ENCODE measurements at regions of chr20 and their contacts with region 1.

Region 1: GRCh38 chr20:17995967-17996819 is 27.4 kb downstream of the MGME1 start:
- DNase-seq: peak; percentile 52 to 55 (median 52)
- ATAC-seq: peak; percentile 83
- H3K4me3 ChIP-seq: no peak overlapping the region
- H3K27ac ChIP-seq: no peak overlapping the region
- H3K4me1 ChIP-seq: no peaks in the 10 kb centered on the region; a peak in 1 of 5 replicates
- H3K27me3 ChIP-seq: peaks cover 6 to 7% of the 10 kb centered on the region in 2 experiments; a peak in 3 of 5 replicates
- CTCF ChIP-seq: peak; percentile 69 to 89 (median 81)
- EP300 ChIP-seq: no peak
- POLR2A ChIP-seq: no peak
- RAD21 ChIP-seq: peak; percentile 72 to 82

Region 2: DNA sequence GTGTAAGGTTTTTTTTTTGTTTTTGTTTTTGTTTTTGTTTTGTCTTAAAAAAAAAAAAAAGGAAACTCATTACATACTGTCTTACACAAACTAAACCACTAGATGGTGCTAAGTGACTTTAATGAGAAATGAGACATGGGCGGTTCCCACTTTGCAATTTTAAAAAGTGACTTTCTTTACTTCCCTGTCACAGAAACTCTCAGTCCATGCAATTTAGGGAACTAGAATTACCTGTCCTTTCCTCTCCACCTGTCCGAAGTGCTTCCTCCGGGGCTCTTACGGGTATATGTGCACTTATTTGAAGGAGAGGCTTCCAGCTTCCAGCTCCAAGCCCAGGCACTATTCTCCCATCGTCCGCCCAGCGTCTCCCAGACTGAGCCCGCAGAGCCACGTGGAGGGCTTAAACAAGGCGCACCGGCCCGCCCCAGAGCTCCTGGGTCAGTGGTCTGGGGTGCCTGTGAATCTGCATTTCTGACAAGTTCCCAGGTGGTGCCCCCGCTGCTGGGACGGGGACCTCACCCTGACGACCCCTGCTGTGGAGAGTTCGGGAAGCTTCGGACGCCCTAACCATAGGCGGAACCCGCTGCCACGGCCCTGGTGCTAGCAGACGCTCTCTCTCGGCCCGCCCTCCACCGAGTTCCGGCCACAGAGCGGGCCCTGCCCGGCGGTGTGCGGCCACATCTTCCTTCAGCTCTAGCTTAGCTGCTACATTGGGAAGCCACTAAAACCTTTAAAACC is 491.1 kb before region 1 on chr20:
- CTCF ChIA-PET with region 1: interaction called, 3 read pairs
- POLR2A ChIA-PET with region 1: no interaction called
- in situ Hi-C with region 1: no loop called
- intact Hi-C with region 1: loop called (anchors 10 kb)
- DNase-seq: peak; percentile 19 to 43 (median 24)
- ATAC-seq: peak; percentile 76
- H3K4me3 ChIP-seq: no peak overlapping the region
- H3K27ac ChIP-seq: no peak overlapping the region
- H3K4me1 ChIP-seq: peaks cover 6 to 23% of the 10 kb centered on the region in 2 experiments
- H3K27me3 ChIP-seq: peaks cover 0 to 16% of the 10 kb centered on the region in 2 experiments; a peak in 3 of 5 replicates
- CTCF ChIP-seq: peak; percentile 35 to 74 (median 45); a peak in 4 of 6 replicates
- EP300 ChIP-seq: no peak
- POLR2A ChIP-seq: no peak
- RAD21 ChIP-seq: peak; percentile 55 to 61

Region 3: DNA sequence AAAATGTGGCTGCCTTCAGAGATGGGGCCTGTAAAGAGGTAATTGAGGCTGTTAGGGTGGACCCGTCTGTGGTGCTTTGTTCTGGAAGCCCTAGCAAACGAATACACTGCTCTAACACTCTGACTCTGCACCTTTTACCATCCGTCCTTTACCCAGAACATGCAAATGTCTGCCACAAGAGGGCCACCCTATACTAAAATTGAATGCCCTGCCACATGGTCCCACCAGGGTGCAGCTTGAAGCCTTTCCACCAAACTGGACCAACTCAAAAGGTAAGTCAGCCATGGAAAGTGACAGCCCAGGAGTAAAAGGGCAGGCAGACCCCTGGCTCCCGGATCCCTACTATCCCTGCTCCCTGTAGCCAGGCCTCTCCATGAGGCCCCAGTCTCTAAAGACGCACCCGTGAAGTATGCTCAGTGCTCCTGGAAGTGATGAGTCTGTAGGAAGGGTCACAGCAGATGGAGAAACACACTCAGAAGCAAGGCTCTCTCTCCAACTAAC is 459.2 kb before region 1 on chr20:
- CTCF ChIA-PET with region 1: no interaction called
- POLR2A ChIA-PET with region 1: no interaction called
- in situ Hi-C with region 1: no loop called
- intact Hi-C with region 1: loop called (anchors 10 kb)
- DNase-seq: peak; percentile 68 to 77 (median 72)
- ATAC-seq: peak; percentile 99
- H3K4me3 ChIP-seq: no peak overlapping the region
- H3K27ac ChIP-seq: no peak overlapping the region
- H3K4me1 ChIP-seq: no peaks in the 10 kb centered on the region
- H3K27me3 ChIP-seq: no peaks in the 10 kb centered on the region
- CTCF ChIP-seq: peak; percentile 87 to 98 (median 94)
- EP300 ChIP-seq: no peak
- POLR2A ChIP-seq: no peak
- RAD21 ChIP-seq: peak; percentile 83 to 94

Region 4: GRCh38 chr20:17654649-17655285 is 341.4 kb before region 1 on chr20:
- CTCF ChIA-PET with region 1: interaction called, 4 read pairs
- POLR2A ChIA-PET with region 1: no interaction called
- in situ Hi-C with region 1: no loop called
- intact Hi-C with region 1: loop called (anchors 5 kb)
- DNase-seq: peak; percentile 15 to 44 (median 26)
- ATAC-seq: peak; percentile 67
- H3K4me3 ChIP-seq: no peak overlapping the region
- H3K27ac ChIP-seq: no peak overlapping the region
- H3K4me1 ChIP-seq: no peaks in the 10 kb centered on the region; a peak in 2 of 5 replicates
- H3K27me3 ChIP-seq: no peaks in the 10 kb centered on the region
- CTCF ChIP-seq: peak; percentile 53 to 61 (median 59)
- EP300 ChIP-seq: no peak
- POLR2A ChIP-seq: no peak
- RAD21 ChIP-seq: peak in 1 of 2 experiments; percentile 27; a peak in 1 of 4 replicates

Region 5: DNA sequence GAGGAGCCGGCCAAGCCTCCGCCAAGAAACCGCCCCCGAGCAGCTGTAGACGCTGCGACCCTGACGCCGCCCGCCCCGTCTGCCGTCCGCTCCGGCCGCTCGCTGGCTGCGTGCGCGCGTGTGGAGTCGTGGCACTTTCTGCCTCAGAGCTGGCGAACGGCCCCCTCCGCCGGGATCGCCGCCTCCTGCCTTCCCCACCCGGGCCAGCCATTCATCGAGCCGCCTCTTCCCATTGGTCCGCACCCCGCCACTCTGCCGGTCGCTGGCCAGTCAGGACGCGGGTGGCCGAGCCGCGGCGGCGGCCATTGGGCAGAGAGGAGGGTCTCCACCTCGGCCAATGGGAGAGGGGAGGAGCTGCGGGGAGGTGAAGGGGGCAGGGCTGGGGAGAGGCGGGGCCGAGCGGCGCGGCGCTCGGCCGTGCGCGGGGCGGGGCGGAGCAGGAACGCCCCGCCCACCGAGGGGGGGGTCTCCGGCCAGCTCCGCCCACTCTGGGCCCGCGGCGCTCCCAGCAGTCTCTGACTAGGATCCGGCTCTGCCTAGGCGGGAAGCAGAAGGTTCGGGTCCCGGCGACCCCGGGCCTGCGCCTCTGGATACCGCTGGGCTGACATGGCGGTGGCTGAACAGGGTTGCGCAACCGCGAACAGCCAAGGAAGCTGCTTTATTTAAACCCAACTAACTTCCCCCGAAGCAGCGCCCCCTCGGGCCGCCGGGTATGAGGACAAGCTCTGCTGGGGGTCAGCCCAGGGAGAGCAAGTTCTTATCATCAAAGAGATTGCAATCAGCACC is 313.9 kb before region 1 on chr20 and contains the start of gene RRBP1:
- CTCF ChIA-PET with region 1: interaction called, 4 read pairs
- POLR2A ChIA-PET with region 1: no interaction called
- in situ Hi-C with region 1: no loop called
- intact Hi-C with region 1: loop called (anchors 10 kb)
- DNase-seq: peak; percentile 93 to 95 (median 94)
- ATAC-seq: peak; percentile 99
- H3K4me3 ChIP-seq: peak within 1 kb of the TSS; percentile 65
- H3K27ac ChIP-seq: peak within 1 kb of the TSS; percentile 78
- H3K4me1 ChIP-seq: peaks cover 14 to 29% of the 10 kb centered on the region in 2 experiments
- H3K27me3 ChIP-seq: peaks cover 8 to 20% of the 10 kb centered on the region in 2 experiments
- CTCF ChIP-seq: peak; percentile 66 to 81 (median 67)
- EP300 ChIP-seq: no peak
- POLR2A ChIP-seq: peak; percentile 72
- RAD21 ChIP-seq: peak in 1 of 2 experiments; percentile 18; a peak in 2 of 4 replicates
- polyA plus RNA-seq, gene RRBP1: 0.84 to 0.95 TPM

Region 6: DNA sequence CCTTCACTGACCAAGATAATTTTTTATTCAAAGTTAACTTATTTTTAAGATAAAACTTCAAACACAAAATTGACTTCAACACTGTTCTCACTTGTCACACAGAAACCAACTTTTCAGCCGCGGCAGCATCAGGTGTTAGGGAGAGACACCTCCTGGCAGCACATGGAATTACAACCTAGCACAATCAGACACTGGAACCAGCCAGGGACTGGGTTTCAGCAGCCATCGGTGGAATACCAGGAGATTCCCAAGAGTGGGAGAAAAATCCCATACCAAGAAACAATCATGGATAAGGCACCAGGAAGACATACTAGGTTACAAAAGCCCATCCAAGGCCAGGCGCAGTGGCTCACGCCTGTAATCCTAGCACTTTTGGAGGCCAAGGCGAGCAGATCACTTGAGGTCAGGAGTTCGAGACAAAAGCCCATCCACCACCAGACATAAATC is 97.6 kb before region 1 on chr20:
- CTCF ChIA-PET with region 1: no interaction called
- POLR2A ChIA-PET with region 1: no interaction called
- in situ Hi-C with region 1: no loop called
- intact Hi-C with region 1: loop called (anchors 10 kb)
- DNase-seq: peak; percentile 46 to 62 (median 56)
- ATAC-seq: peak; percentile 74
- H3K4me3 ChIP-seq: no peak overlapping the region
- H3K27ac ChIP-seq: no peak overlapping the region
- H3K4me1 ChIP-seq: peaks cover 9 to 16% of the 10 kb centered on the region in 2 experiments
- H3K27me3 ChIP-seq: 0 out of 5 replicates have a peak, but pooled peaks cover 0 to 5% of the 10 kb centered on the region in 2 experiments
- CTCF ChIP-seq: peak; percentile 70 to 81 (median 74)
- EP300 ChIP-seq: no peak
- POLR2A ChIP-seq: no peak
- RAD21 ChIP-seq: peak; percentile 76 to 79

Region 7: GRCh38 chr20:17985388-17986018 is 10.7 kb before region 1 on chr20:
- CTCF ChIA-PET with region 1: no interaction called
- POLR2A ChIA-PET with region 1: no interaction called
- in situ Hi-C with region 1: no loop called
- intact Hi-C with region 1: no loop called
- DNase-seq: no peak
- ATAC-seq: no peak
- H3K4me3 ChIP-seq: no peak overlapping the region
- H3K27ac ChIP-seq: no peak overlapping the region
- H3K4me1 ChIP-seq: no peaks in the 10 kb centered on the region
- H3K27me3 ChIP-seq: no peaks in the 10 kb centered on the region
- CTCF ChIP-seq: no peak
- EP300 ChIP-seq: no peak
- POLR2A ChIP-seq: no peak
- RAD21 ChIP-seq: no peak